ENCODE measurements at regions of chr2 and their contacts with region 1.

Region 1: GRCh38 chr2:178450774-178451525 is at the starts of genes PJVK and PRKRA:
- DNase-seq: peak; percentile 97 to 99 (median 98)
- ATAC-seq: peak; percentile 98 to 99 (median 98)
- H3K4me3 ChIP-seq: peak within 1 kb of the TSS; percentile 74 to 96 (median 90)
- H3K27ac ChIP-seq: peak within 1 kb of the TSS; percentile 88 to 99 (median 98)
- H3K4me1 ChIP-seq: peaks cover 0 to 35% (median 26%) of the 10 kb centered on the region in 12 donors
- H3K27me3 ChIP-seq: no peaks in the 10 kb centered on the region
- CTCF ChIP-seq: peak in 6 of 12 donors; percentile 3 to 43 (median 11)
- POLR2A ChIP-seq: peak; percentile 80 to 94
- total RNA-seq, gene PJVK: 0.48 to 1.7 (median 1.5) TPM in 8 of 9 donors, not detected in the other
- total RNA-seq, gene PRKRA: 35.2 to 64.3 (median 49.5) TPM

Region 2: GRCh38 chr2:178478439-178479274 is 27.7 kb after region 1 on chr2 and contains the start of gene FKBP7:
- intact Hi-C with region 1: loop called in 4 of 10 experiments (anchors 1 to 2 kb)
- DNase-seq: peak; percentile 88 to 93 (median 90)
- ATAC-seq: peak; percentile 82 to 90 (median 83)
- H3K4me3 ChIP-seq: peak within 1 kb of the TSS; percentile 42 to 85 (median 72)
- H3K27ac ChIP-seq: peak within 1 kb of the TSS; percentile 49 to 97 (median 94)
- H3K4me1 ChIP-seq: peaks cover 5 to 57% (median 40%) of the 10 kb centered on the region in 12 donors
- H3K27me3 ChIP-seq: no peaks in the 10 kb centered on the region
- CTCF ChIP-seq: peak; percentile 47 to 77 (median 67)
- POLR2A ChIP-seq: peak in 1 of 2 donors; percentile 68
- total RNA-seq, gene FKBP7: 6.2 to 11.8 (median 9.0) TPM

Region 3: DNA sequence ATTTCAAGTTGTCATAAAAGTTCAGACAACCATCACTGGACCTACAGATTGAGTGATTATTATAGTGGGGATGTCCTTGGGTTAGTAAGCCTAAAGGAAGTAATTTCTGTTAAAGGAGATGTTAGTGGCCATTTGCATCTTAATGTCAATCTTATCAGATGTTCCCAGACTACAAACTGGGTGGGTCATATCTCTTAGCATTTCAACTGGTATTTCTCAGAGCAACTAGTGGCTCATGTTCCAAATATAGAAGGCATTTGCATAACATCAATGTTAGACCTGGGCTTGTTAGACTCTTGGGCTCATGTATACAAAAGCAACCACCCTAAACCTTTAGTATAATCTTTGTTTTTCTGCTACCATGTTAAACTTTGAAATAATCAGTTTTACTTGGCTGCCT is 47.2 kb after region 1 on chr2:
- intact Hi-C with region 1: no loop called
- DNase-seq: no peak
- ATAC-seq: peak in 2 of 4 donors; percentile 51 to 60
- H3K4me3 ChIP-seq: no peak overlapping the region
- H3K27ac ChIP-seq: no peak overlapping the region
- H3K4me1 ChIP-seq: peaks cover 0 to 8% (median 0%) of the 10 kb centered on the region in 12 donors
- H3K27me3 ChIP-seq: no peaks in the 10 kb centered on the region
- CTCF ChIP-seq: no peak
- POLR2A ChIP-seq: no peak

Measured in heart left ventricle (tissue), 16 donors.